ENCODE measurements at regions of chr6 and their contacts with region 1.

Region 1: GRCh38 chr6:53410508-53411258 is 61.9 kb upstream of the ELOVL5 start:
- DNase-seq: peak in 1 of 2 donors; percentile 47
- ATAC-seq: no peak
- H3K4me3 ChIP-seq: no peak overlapping the region
- H3K27ac ChIP-seq: no peak overlapping the region
- H3K4me1 ChIP-seq: no peaks in the 10 kb centered on the region
- H3K27me3 ChIP-seq: no peaks in the 10 kb centered on the region

Region 2: DNA sequence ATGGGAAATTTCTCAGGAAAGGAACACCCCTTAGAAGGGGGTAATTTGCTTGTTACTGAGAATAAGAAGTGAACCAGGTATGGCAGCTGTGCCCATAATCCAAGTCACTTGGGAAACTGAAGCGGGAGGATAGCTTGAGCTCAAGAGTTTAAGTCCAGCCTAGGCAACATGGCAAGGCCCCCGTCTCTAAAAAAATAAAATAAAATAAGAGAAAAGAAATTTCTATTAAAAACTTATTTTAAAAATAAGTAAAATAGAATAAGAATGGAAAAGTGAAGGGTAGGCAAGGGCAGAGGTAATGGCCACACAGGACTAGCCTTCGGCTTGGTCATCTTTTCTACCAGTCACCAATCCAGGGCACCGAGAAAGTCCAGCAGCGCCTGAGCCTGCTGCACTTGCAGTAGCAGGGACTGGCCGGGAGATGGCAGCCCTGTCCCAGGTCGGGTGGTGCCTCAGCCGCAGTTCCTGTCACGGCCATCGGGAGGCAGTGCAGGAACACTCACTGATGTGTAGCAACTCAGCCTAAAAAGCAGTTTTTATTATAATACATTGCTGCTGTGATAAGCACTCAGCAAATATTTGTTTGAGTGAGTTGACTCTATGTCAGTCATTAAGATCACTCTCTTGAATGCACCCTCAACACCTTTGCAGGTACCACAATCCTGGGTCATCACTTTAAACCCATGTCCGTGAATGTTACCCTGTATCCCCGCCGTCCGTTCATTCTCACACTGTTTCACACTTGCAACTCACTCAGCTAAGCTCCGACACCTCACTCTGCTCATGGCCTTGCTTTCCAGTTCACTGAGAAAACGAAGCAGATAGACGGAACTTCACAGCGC is 238.9 kb before region 1 on chr6:
- intact Hi-C with region 1: loop called in 1 of 2 experiments (anchors 1 kb)
- DNase-seq: peak; percentile 90 to 96
- ATAC-seq: peak; percentile 98
- H3K4me3 ChIP-seq: no peak overlapping the region
- H3K27ac ChIP-seq: no peak overlapping the region
- H3K4me1 ChIP-seq: no peaks in the 10 kb centered on the region
- H3K27me3 ChIP-seq: no peaks in the 10 kb centered on the region

Region 3: DNA sequence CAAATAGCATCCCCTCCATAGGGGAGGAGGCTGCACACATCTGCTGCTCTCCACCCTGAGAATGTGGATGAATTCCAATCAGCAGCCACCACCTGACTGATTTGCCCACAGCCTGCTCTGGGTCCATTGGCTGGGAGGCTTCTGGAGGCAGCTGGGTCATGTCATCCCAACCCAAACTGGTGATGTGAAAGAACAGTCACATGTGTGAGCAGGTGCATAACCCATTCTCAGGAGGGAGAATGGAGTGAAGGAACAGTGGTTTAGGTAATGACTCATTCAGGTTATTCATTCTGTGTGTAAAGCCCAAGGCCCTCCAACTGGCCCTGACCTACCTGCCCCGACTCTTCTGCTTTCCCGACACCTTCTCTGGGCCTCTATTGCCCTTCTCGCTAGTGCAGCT is 171.2 kb before region 1 on chr6:
- intact Hi-C with region 1: no loop called
- DNase-seq: no peak
- ATAC-seq: no peak
- H3K4me3 ChIP-seq: no peak overlapping the region
- H3K27ac ChIP-seq: no peak overlapping the region
- H3K4me1 ChIP-seq: no peaks in the 10 kb centered on the region
- H3K27me3 ChIP-seq: no peaks in the 10 kb centered on the region